WTC11 (cell line): ENCODE measurements at regions of chr22 and their contacts with region 1.

Region 1: GRCh38 chr22:44684506-44685383 is 17.3 kb upstream of the PRR5 start:
- DNase-seq: peak; percentile 92
- ATAC-seq: peak; percentile 89
- H3K4me3 Mint-ChIP-seq: no peak overlapping the region
- H3K27ac Mint-ChIP-seq: no peak overlapping the region
- H3K4me1 Mint-ChIP-seq: peaks cover 10% of the 10 kb centered on the region
- H3K27me3 Mint-ChIP-seq: peaks cover under 1% of the 10 kb centered on the region; the same call in 1 of the 2 replicates
- CTCF ChIP-seq: peak; percentile 90

Region 2: DNA sequence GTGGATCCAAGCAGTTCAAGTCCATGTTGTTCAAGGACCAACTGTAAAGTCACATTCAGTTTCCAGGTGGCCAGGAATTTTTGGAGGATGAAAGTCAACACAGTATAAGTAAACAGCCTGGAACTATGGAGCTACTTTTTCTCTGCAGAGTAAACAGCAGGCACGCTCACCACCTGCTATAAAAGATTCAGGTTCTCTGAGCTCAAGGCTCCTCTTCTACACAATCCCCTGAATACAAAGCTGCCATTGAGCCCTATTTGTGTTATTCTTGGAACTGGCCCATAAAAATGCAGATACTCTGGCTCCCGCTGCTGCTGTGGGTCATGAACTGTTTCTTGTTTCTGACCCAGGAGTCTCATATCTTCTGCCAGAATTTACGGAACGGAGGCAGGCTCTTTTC is 39.7 kb before region 1 on chr22:
- CTCF ChIA-PET with region 1: interaction called, 14 read pairs
- POLR2A ChIA-PET with region 1: no interaction called
- DNase-seq: no peak
- ATAC-seq: no peak
- H3K4me3 Mint-ChIP-seq: no peak overlapping the region
- H3K27ac Mint-ChIP-seq: no peak overlapping the region
- H3K4me1 Mint-ChIP-seq: no peaks in the 10 kb centered on the region
- H3K27me3 Mint-ChIP-seq: no peaks in the 10 kb centered on the region; the same call in 1 of the 2 replicates
- CTCF ChIP-seq: no peak

Region 3: GRCh38 chr22:44669561-44669976 is 15.2 kb before region 1 on chr22:
- CTCF ChIA-PET with region 1: interaction called, 57 read pairs
- POLR2A ChIA-PET with region 1: no interaction called
- DNase-seq: peak; percentile 57
- ATAC-seq: peak; percentile 45
- H3K4me3 Mint-ChIP-seq: peak overlapping the region; percentile 65
- H3K27ac Mint-ChIP-seq: no peak overlapping the region
- H3K4me1 Mint-ChIP-seq: peaks cover 5% of the 10 kb centered on the region; the same call in 1 of the 2 replicates
- H3K27me3 Mint-ChIP-seq: peaks cover 39% of the 10 kb centered on the region
- CTCF ChIP-seq: peak; percentile 48; the same call in 1 of the 2 replicates

Region 4: GRCh38 chr22:44729391-44730021 is 44.8 kb after region 1 on chr22:
- CTCF ChIA-PET with region 1: interaction called, 30 read pairs
- POLR2A ChIA-PET with region 1: no interaction called
- DNase-seq: no peak
- ATAC-seq: no peak
- H3K4me3 Mint-ChIP-seq: no peak overlapping the region
- H3K27ac Mint-ChIP-seq: no peak overlapping the region
- H3K4me1 Mint-ChIP-seq: no peaks in the 10 kb centered on the region
- H3K27me3 Mint-ChIP-seq: no peaks in the 10 kb centered on the region
- CTCF ChIP-seq: no peak

Region 5: GRCh38 chr22:44752285-44753188 is 67.8 kb after region 1 on chr22 and contains the start of gene ARHGAP8:
- CTCF ChIA-PET with region 1: interaction called, 13 read pairs
- POLR2A ChIA-PET with region 1: no interaction called
- DNase-seq: peak; percentile 69
- ATAC-seq: peak; percentile 65
- H3K4me3 Mint-ChIP-seq: peak within 1 kb of the TSS; percentile 81
- H3K27ac Mint-ChIP-seq: no peak within 1 kb of the TSS
- H3K4me1 Mint-ChIP-seq: peaks cover 39% of the 10 kb centered on the region
- H3K27me3 Mint-ChIP-seq: peaks cover 3% of the 10 kb centered on the region; the same call in 1 of the 2 replicates
- CTCF ChIP-seq: no peak
- total RNA-seq, gene ARHGAP8: 50.5 to 61.4 TPM (median 58.0 TPM) in 3 replicates

Region 6: GRCh38 chr22:44796972-44797725 is 112.4 kb after region 1 on chr22:
- CTCF ChIA-PET with region 1: interaction called, 16 read pairs
- POLR2A ChIA-PET with region 1: no interaction called
- DNase-seq: no peak
- ATAC-seq: no peak
- H3K4me3 Mint-ChIP-seq: no peak overlapping the region
- H3K27ac Mint-ChIP-seq: peak overlapping the region; percentile 81
- H3K4me1 Mint-ChIP-seq: peaks cover 40% of the 10 kb centered on the region
- H3K27me3 Mint-ChIP-seq: no peaks in the 10 kb centered on the region
- CTCF ChIP-seq: no peak